ENCODE measurements at regions of chr4 and their contacts with region 1.

Region 1: GRCh38 chr4:55948726-55949474 is at the start of gene CEP135:
- DNase-seq: peak; percentile 85 to 99 (median 94)

Region 2: GRCh38 chr4:55993994-55994663 is 45.2 kb after region 1 on chr4:
- intact Hi-C with region 1: no loop called
- DNase-seq: no peak

Region 3: GRCh38 chr4:56048702-56049431 is 100.0 kb after region 1 on chr4:
- intact Hi-C with region 1: loop called (anchors 1 kb)
- DNase-seq: peak; percentile 42 to 95 (median 60)

Region 4: DNA sequence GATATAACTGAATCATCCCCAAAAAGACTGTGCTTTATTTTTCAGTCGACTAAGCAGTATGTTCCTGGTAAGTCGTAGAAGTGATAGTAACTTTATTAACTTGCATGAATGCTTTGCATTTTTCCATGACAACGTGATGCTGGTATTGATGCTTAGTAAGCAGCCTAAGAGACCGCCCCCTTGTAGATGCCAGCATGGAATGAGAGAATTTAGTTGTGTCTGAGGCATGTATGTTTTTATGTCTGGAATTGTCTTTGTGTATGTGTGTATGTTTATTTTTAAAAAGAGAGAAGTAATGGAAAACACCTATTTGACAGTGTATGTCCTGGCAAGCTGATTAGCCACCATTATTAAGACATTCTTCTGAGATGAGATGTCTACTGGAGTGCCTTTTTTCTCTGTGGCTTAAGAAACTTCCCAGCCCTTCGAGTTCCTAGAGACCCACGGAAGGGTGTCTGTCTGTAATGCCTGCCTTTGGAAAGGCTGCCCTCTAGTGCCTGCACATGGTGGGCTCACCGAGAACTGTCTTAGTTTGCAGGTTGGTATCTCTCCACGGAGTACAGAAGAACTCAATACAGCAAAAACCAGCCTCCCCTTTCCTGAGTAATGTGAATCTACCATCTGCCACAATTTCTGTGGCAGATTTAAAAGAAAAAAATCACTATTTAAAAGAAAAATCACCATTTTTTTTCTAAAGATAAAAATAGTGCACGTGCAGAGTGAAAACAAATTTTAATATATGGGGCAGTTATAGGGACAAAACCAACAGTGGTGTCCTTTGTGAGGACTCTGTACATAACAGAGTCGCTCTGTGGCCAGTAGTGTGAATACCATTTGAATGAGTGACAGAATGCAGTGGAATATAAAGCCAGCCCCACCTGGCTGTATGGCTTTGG is 352.5 kb after region 1 on chr4:
- intact Hi-C with region 1: loop called (anchors 1 kb)
- DNase-seq: peak; percentile 50 to 96 (median 76)